Astrocyte of the cerebellum (primary cell): ENCODE measurements at regions of chr1 and their contacts with region 1.

Region 1: DNA sequence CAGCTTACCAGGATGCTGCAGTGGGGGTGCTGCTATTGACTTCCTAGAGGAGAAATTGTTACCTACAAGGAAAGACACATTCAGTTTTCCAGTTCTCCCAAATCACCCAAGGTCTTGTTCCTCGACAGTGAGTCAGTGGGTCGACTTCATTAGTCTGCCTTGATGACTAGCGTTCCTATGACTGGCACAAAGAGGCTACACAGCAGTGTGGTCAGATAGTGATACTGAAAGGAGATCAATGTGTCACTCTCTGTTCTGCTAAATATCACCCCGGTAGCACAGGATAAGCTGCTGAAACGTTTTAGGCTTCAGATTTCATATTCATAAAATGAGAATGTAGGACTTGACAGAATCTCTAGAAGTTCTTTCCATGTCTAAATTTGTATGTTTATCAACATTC is 357.4 kb downstream of the LMX1A start:
- DNase-seq: no peak
- H3K4me3 ChIP-seq: no peak overlapping the region
- CTCF ChIP-seq: no peak

Region 2: DNA sequence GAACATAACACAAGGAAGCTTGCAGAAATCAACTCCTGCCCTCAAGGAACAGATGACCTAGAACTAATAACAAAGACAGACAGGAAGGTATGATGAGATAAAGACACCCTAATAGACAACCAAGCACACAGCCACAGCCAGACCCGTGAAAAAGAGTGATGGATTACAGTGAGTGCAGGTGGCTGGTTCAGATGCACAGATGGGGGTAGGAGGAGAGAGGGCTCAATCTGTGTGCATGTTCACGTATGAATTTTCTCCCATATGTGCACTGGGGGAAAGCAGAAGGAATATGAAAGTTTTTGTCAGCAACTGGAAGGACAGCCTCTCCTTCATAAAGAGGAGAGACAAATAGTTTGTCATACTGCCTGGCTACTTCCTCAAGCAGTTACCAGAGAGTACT is 73.0 kb before region 1 on chr1:
- in situ Hi-C with region 1: loop called (anchors 5 kb)
- DNase-seq: no peak
- H3K4me3 ChIP-seq: no peak overlapping the region
- CTCF ChIP-seq: no peak